ENCODE measurements at regions of chr1 and their contacts with region 1.

Region 1: DNA sequence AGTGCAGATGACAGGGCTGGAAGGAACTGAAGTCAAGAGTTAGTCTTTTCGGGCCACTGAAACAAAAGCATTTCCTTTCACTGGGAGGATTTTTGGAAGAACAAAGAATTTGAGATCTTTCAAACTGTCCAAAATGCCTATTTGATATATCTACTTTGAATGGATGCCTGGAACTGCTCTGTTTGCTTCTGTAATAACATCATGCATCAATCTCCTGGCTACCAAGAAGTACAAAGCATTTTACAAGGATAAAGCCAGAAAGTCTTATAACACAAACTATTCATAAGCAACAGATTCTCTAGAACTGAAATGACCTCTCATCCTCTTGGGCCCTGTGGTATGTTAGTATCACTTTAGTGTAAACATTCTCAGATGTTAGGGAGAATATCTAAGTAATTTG is 18.2 kb upstream of the RHOU start:
- DNase-seq: no peak
- ATAC-seq: no peak
- H3K4me3 ChIP-seq: no peak overlapping the region
- H3K4me3 Mint-ChIP-seq: no peak overlapping the region
- H3K27ac ChIP-seq: no peak overlapping the region
- H3K27ac Mint-ChIP-seq: no peak overlapping the region
- H3K4me1 ChIP-seq: no peaks in the 10 kb centered on the region
- H3K4me1 Mint-ChIP-seq: no peaks in the 10 kb centered on the region
- H3K27me3 ChIP-seq: no peaks in the 10 kb centered on the region
- H3K27me3 Mint-ChIP-seq: no peaks in the 10 kb centered on the region
- CTCF ChIP-seq: no peak

Region 2: DNA sequence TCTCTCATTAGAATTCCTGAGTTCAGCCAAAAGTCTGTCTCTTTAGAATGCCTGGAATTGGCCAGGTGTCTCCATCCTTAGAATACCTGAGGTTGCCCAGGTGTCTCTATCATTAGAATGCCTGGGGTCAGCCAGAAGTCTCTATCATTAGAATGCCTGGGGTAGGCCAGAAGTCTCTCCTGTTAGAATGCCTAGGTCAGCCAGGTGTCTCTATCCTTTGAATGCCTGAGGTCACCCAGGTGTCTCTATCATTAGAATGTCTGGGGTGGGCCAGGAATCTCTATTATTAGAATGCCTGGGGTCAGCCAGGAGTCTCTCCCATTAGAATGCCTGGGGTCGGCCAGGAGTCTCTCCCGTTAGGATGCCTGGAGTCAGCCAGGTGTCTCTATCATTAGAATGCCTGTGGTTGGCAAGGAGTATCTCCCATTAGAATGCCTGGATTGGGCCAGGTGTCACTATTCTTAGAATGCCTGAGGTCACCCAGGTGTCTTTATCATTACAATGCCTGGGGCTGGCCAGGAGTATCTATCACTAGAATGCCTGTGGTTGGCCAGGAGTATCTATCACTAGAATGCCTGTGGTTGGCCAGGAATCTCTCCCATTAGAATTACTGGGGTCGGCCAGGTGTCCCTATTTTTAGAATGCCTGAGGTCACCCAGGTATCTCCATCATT is 186.9 kb before region 1 on chr1:
- CTCF ChIA-PET with region 1: no interaction called
- POLR2A ChIA-PET with region 1: no interaction called
- intact Hi-C with region 1: loop called in 1 of 2 experiments (anchors 5 kb)
- DNase-seq: no peak
- ATAC-seq: no peak
- H3K4me3 ChIP-seq: no peak overlapping the region
- H3K4me3 Mint-ChIP-seq: no peak overlapping the region
- H3K27ac ChIP-seq: no peak overlapping the region
- H3K27ac Mint-ChIP-seq: no peak overlapping the region
- H3K4me1 ChIP-seq: no peaks in the 10 kb centered on the region
- H3K4me1 Mint-ChIP-seq: no peaks in the 10 kb centered on the region
- H3K27me3 ChIP-seq: peaks cover 10 to 11% of the 10 kb centered on the region in 2 experiments
- H3K27me3 Mint-ChIP-seq: peaks cover 85% of the 10 kb centered on the region
- CTCF ChIP-seq: no peak

Measured in CD4-positive, alpha-beta T cell (primary cell).